Endothelial cell of umbilical vein (primary cell): ENCODE measurements at regions of chr10 and their contacts with region 1.

Region 1: DNA sequence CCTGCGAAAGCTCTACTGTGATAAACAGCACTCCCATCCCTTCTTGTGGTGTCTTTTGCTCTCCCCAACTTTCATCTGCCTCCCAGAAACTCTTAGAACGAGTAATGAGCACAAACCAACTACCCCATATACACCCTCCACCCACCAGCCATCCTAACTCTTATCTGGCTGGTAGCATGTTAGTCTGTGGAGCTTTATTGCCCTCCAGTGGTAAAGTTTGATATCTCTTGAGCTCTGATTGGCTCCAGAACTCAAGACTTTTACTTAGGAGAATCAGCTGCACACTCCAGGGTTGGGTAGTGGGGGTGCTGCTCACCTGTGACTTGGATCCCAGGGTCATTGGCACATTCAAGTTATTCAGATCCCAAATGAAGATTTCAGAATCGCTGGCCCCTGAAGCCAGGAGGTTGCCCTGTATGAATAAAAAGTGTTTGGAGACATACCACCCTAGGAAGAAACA is 10.9 kb downstream of the SEC31B start:
- DNase-seq: peak; percentile 73
- H3K4me3 ChIP-seq: no peak overlapping the region
- H3K27ac ChIP-seq: no peak overlapping the region
- H3K4me1 ChIP-seq: no peaks in the 10 kb centered on the region
- H3K27me3 ChIP-seq: no peaks in the 10 kb centered on the region
- CTCF ChIP-seq: peak; percentile 51 to 54
- POLR2A ChIP-seq: no peak

Region 2: DNA sequence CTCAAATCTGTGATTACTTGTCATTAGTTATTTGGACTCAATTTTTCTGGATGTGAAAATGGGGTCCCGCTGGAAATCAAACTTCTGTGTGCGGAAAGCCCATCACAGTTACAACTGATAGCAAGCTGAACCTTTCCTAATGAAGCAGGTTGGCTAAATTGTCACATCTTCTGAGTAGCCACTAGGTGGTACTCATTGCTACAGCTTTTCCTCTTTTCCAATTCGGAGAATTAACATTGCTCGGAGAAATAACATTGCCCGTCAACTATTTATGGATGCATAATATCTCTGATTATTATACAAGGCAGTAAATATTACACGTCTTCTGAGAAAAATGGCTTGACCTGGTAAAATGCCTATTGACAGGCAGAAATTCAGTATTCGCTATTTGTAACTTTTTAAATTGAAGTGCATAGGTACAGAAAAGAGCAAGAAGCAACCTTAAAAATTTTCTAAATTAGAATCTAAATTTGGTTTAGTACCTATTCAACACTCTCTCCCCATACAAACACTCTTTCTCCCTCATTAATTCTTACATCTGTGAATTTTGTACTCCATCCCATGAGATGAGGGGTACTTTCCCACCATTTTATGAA is 204.9 kb before region 1 on chr10:
- CTCF ChIA-PET with region 1: interaction called, 12 read pairs
- POLR2A ChIA-PET with region 1: no interaction called
- dilution Hi-C with region 1: no loop called
- intact Hi-C with region 1: no loop called
- DNase-seq: peak; percentile 22
- H3K4me3 ChIP-seq: no peak overlapping the region
- H3K27ac ChIP-seq: no peak overlapping the region
- H3K4me1 ChIP-seq: no peaks in the 10 kb centered on the region
- H3K27me3 ChIP-seq: peaks cover 11 to 18% of the 10 kb centered on the region in 2 experiments
- CTCF ChIP-seq: peak; percentile 52
- POLR2A ChIP-seq: no peak

Region 3: GRCh38 chr10:100338434-100339036 is 170.2 kb before region 1 on chr10:
- CTCF ChIA-PET with region 1: interaction called, 22 read pairs
- POLR2A ChIA-PET with region 1: no interaction called
- dilution Hi-C with region 1: no loop called
- intact Hi-C with region 1: loop called (anchors 1 kb)
- DNase-seq: peak; percentile 63
- H3K4me3 ChIP-seq: no peak overlapping the region
- H3K27ac ChIP-seq: no peak overlapping the region
- H3K4me1 ChIP-seq: no peaks in the 10 kb centered on the region
- H3K27me3 ChIP-seq: peaks cover 7 to 8% of the 10 kb centered on the region in 2 experiments
- CTCF ChIP-seq: peak; percentile 81 to 88
- POLR2A ChIP-seq: no peak

Region 4: DNA sequence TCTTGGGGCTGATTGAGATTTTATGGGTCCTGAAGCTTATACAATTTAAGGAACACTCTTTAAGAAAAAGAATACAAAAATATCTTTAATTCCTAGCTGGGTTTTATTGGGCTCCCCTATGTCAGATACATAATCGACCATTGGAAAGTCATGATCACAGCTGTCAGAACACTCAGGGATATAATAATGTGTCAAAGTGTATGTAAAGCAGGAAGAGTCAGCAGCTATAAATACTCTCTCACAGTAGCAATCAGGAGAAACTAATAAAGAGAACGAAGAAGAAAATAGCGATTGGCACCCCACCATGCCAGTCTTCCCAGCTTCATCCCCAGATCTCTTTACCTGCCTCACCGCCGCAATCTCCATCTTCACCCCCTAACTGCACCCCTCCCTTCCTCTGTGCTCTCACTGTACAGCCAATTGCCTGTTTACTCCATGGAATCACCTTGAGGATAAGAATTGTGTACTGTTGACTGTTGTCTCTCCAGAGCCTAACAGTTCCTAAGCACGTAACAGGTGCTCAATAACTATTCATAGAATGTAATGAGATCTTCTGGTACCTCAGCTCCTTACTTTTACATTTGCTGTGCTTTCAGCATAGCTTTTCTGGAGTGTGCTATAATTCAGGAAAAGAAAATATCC is 69.9 kb before region 1 on chr10:
- CTCF ChIA-PET with region 1: interaction called, 39 read pairs
- POLR2A ChIA-PET with region 1: no interaction called
- dilution Hi-C with region 1: no loop called
- intact Hi-C with region 1: loop called (anchors 1 kb)
- DNase-seq: no peak
- H3K4me3 ChIP-seq: no peak overlapping the region
- H3K27ac ChIP-seq: no peak overlapping the region
- H3K4me1 ChIP-seq: no peaks in the 10 kb centered on the region
- H3K27me3 ChIP-seq: peaks cover 2 to 4% of the 10 kb centered on the region in 2 experiments
- CTCF ChIP-seq: no peak
- POLR2A ChIP-seq: no peak

Region 5: GRCh38 chr10:100481462-100482081 is 27.1 kb before region 1 on chr10:
- CTCF ChIA-PET with region 1: interaction called, 41 read pairs
- POLR2A ChIA-PET with region 1: no interaction called
- dilution Hi-C with region 1: no loop called
- intact Hi-C with region 1: loop called (anchors 1 kb)
- DNase-seq: peak; percentile 97
- H3K4me3 ChIP-seq: peak overlapping the region; percentile 13 to 48 (median 27)
- H3K27ac ChIP-seq: no peak overlapping the region
- H3K4me1 ChIP-seq: peaks cover 12% of the 10 kb centered on the region
- H3K27me3 ChIP-seq: peaks cover 35 to 40% of the 10 kb centered on the region in 2 experiments
- CTCF ChIP-seq: peak in 1 of 2 donors; percentile 2
- POLR2A ChIP-seq: no peak

Region 6: GRCh38 chr10:100496567-100496966 is 12.2 kb before region 1 on chr10:
- CTCF ChIA-PET with region 1: interaction called, 11 read pairs
- POLR2A ChIA-PET with region 1: no interaction called
- dilution Hi-C with region 1: no loop called
- intact Hi-C with region 1: no loop called
- DNase-seq: no peak
- H3K4me3 ChIP-seq: no peak overlapping the region
- H3K27ac ChIP-seq: no peak overlapping the region
- H3K4me1 ChIP-seq: no peaks in the 10 kb centered on the region
- H3K27me3 ChIP-seq: no peaks in the 10 kb centered on the region
- CTCF ChIP-seq: no peak
- POLR2A ChIP-seq: no peak

Region 7: DNA sequence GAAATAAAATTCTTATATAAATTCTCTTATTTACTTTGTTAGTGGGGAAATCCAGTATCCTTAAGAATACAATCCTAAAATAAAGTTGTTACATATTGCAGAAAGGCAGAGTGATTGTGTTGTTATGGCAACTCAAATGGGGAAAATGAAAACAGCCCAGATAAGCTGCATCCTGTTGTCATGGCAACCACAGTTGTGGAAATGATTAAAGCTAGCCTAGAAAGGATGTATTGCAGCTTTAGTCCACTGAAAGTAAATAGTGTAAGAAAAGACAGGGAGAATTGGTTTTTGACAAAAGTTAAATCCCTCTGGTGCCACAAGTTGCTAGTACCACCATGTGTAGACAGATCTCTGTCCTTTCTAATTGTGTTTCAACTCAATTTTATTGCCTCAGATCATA is 888.4 kb after region 1 on chr10:
- CTCF ChIA-PET with region 1: no interaction called
- POLR2A ChIA-PET with region 1: no interaction called
- dilution Hi-C with region 1: no loop called
- intact Hi-C with region 1: no loop called
- DNase-seq: peak; percentile 78
- H3K4me3 ChIP-seq: no peak overlapping the region
- H3K27ac ChIP-seq: no peak overlapping the region
- H3K4me1 ChIP-seq: no peaks in the 10 kb centered on the region
- H3K27me3 ChIP-seq: no peaks in the 10 kb centered on the region
- CTCF ChIP-seq: no peak
- POLR2A ChIP-seq: no peak